Activated CD4-positive, alpha-beta T cell treated with anti-CD3 and anti-CD28 coated beads for 36 hours (primary cell): ENCODE measurements at regions of chr12 and their contacts with region 1.

Region 1: DNA sequence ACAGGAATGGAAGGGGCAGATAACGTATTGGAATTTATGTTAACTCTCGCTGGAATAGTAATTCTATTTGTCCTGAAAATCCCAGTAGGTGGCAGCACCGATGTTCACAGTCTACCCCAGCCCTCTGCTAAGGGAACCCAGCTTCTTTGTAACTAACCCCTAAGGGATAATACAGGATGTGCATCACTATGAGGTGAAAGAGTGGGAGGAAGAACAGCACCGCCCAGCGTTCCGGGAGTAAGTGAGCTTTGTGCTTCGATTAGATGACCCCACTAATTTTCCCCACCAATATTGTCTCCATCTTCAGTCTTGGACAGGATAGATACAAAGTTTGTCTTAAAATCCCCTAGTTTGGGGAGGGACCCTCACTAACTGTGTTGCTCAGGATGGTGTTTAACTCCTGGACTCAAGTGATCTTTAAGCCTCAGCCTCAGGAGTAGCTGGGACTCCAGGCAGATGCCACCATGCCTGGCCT is 2.7 kb downstream of the SLC2A3 start:
- DNase-seq: peak; percentile 85
- ATAC-seq: peak; percentile 76
- H3K4me3 Mint-ChIP-seq: no peak overlapping the region
- H3K27ac Mint-ChIP-seq: no peak overlapping the region
- H3K4me1 Mint-ChIP-seq: peaks cover 34% of the 10 kb centered on the region
- H3K27me3 Mint-ChIP-seq: no peaks in the 10 kb centered on the region

Region 2: GRCh38 chr12:7498832-7499231 is 434.5 kb before region 1 on chr12:
- CTCF ChIA-PET with region 1: no interaction called
- POLR2A ChIA-PET with region 1: no interaction called
- intact Hi-C with region 1: no loop called
- DNase-seq: no peak
- ATAC-seq: no peak
- H3K4me3 Mint-ChIP-seq: no peak overlapping the region
- H3K27ac Mint-ChIP-seq: no peak overlapping the region
- H3K4me1 Mint-ChIP-seq: no peaks in the 10 kb centered on the region
- H3K27me3 Mint-ChIP-seq: peaks cover 24% of the 10 kb centered on the region

Region 3: GRCh38 chr12:7747246-7747645 is 186.0 kb before region 1 on chr12 and contains the start of gene CLEC4C:
- CTCF ChIA-PET with region 1: no interaction called
- POLR2A ChIA-PET with region 1: no interaction called
- intact Hi-C with region 1: no loop called
- DNase-seq: no peak
- ATAC-seq: no peak
- H3K4me3 Mint-ChIP-seq: no peak within 1 kb of the TSS
- H3K27ac Mint-ChIP-seq: no peak within 1 kb of the TSS
- H3K4me1 Mint-ChIP-seq: no peaks in the 10 kb centered on the region
- H3K27me3 Mint-ChIP-seq: no peaks in the 10 kb centered on the region
- total RNA-seq, gene CLEC4C: not detected

Region 4: DNA sequence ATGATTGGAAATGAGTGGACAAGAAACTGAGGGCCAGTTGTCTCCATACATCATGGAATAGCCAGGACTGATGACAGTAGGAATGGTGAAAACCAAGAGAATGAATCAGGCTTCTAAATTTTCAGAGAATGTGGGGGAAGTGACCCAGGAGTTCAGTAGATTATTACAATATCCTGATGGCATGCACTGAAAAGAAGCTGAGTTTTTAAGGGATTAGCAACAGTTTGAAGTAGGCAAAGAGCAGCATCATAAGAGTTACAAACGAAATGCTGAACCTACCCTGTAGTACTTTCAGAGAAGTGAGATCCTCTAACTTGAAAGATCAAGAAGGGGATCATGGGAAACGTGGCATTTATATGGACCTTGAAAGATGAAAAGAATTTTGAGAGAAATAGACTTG is 73.7 kb before region 1 on chr12:
- CTCF ChIA-PET with region 1: interaction called, 3 read pairs
- POLR2A ChIA-PET with region 1: no interaction called
- intact Hi-C with region 1: loop called in 1 of 2 experiments (anchors 5 kb)
- DNase-seq: no peak
- ATAC-seq: no peak
- H3K4me3 Mint-ChIP-seq: no peak overlapping the region
- H3K27ac Mint-ChIP-seq: no peak overlapping the region
- H3K4me1 Mint-ChIP-seq: peaks cover 16% of the 10 kb centered on the region
- H3K27me3 Mint-ChIP-seq: no peaks in the 10 kb centered on the region

Region 5: GRCh38 chr12:7959701-7960121 is 26.4 kb after region 1 on chr12:
- CTCF ChIA-PET with region 1: interaction called, 210 read pairs
- POLR2A ChIA-PET with region 1: interaction called, 115 read pairs
- intact Hi-C with region 1: loop called (anchors 1 kb)
- DNase-seq: peak; percentile 60
- ATAC-seq: peak; percentile 34
- H3K4me3 Mint-ChIP-seq: peak overlapping the region; percentile 86
- H3K27ac Mint-ChIP-seq: peak overlapping the region; percentile 94
- H3K4me1 Mint-ChIP-seq: peaks cover 30% of the 10 kb centered on the region
- H3K27me3 Mint-ChIP-seq: no peaks in the 10 kb centered on the region

Region 6: GRCh38 chr12:7989827-7990551 is 56.7 kb after region 1 on chr12:
- CTCF ChIA-PET with region 1: interaction called, 70 read pairs
- POLR2A ChIA-PET with region 1: interaction called, 11 read pairs
- intact Hi-C with region 1: loop called (anchors 1 kb)
- DNase-seq: peak; percentile 94
- ATAC-seq: peak; percentile 92
- H3K4me3 Mint-ChIP-seq: peak overlapping the region; percentile 62
- H3K27ac Mint-ChIP-seq: peak overlapping the region; percentile 90
- H3K4me1 Mint-ChIP-seq: peaks cover 42% of the 10 kb centered on the region
- H3K27me3 Mint-ChIP-seq: no peaks in the 10 kb centered on the region

Region 7: GRCh38 chr12:8026291-8026900 is 93.1 kb after region 1 on chr12:
- CTCF ChIA-PET with region 1: interaction called, 6 read pairs
- POLR2A ChIA-PET with region 1: interaction called, 11 read pairs
- intact Hi-C with region 1: loop called in 1 of 2 experiments (anchors 1 kb)
- DNase-seq: peak; percentile 98
- ATAC-seq: peak; percentile 97
- H3K4me3 Mint-ChIP-seq: peak overlapping the region; percentile 92
- H3K27ac Mint-ChIP-seq: peak overlapping the region; percentile 97
- H3K4me1 Mint-ChIP-seq: peaks cover 11% of the 10 kb centered on the region
- H3K27me3 Mint-ChIP-seq: no peaks in the 10 kb centered on the region